Posterior vena cava (tissue), 2 donors: ENCODE measurements at regions of chr16 and their contacts with region 1.

Region 1: GRCh38 chr16:30104494-30104968 is 8.5 kb upstream of the YPEL3 start:
- DNase-seq: no peak

Region 2: GRCh38 chr16:30075507-30076275 is 28.8 kb before region 1 on chr16 and contains the start of gene PPP4C:
- intact Hi-C with region 1: loop called in 1 of 2 experiments (anchors 2 kb)
- DNase-seq: peak; percentile 97
- total RNA-seq, gene PPP4C: 40.0 to 46.9 TPM